Activated CD4-positive, alpha-beta T cell treated with anti-CD3 and anti-CD28 coated beads for 36 hours (primary cell): ENCODE measurements at regions of chr7 and their contacts with region 1.

Region 1: GRCh38 chr7:99408379-99409191 is at the starts of genes BUD31 and PDAP1:
- DNase-seq: peak; percentile 94
- ATAC-seq: peak; percentile 89
- H3K4me3 Mint-ChIP-seq: peak within 1 kb of the TSS; percentile 90
- H3K27ac Mint-ChIP-seq: peak within 1 kb of the TSS; percentile 96
- H3K4me1 Mint-ChIP-seq: peaks cover 40% of the 10 kb centered on the region
- H3K27me3 Mint-ChIP-seq: no peaks in the 10 kb centered on the region
- total RNA-seq, gene BUD31: 140 to 190 TPM
- total RNA-seq, gene PDAP1: 171 TPM

Region 2: GRCh38 chr7:99374103-99375064 is 34.2 kb before region 1 on chr7 and contains the start of gene ARPC1B:
- CTCF ChIA-PET with region 1: interaction called, 3 read pairs
- POLR2A ChIA-PET with region 1: interaction called, 5 read pairs
- intact Hi-C with region 1: loop called (anchors 1 to 5 kb)
- DNase-seq: peak; percentile 94
- ATAC-seq: peak; percentile 61
- H3K4me3 Mint-ChIP-seq: peak within 1 kb of the TSS; percentile 72
- H3K27ac Mint-ChIP-seq: peak within 1 kb of the TSS; percentile 67
- H3K4me1 Mint-ChIP-seq: peaks cover 28% of the 10 kb centered on the region
- H3K27me3 Mint-ChIP-seq: no peaks in the 10 kb centered on the region
- total RNA-seq, gene ARPC1B: 318 to 326 TPM

Region 3: GRCh38 chr7:99419323-99420021 is 10.9 kb after region 1 on chr7:
- CTCF ChIA-PET with region 1: interaction called, 6 read pairs
- POLR2A ChIA-PET with region 1: interaction called, 13 read pairs
- intact Hi-C with region 1: no loop called
- DNase-seq: no peak
- ATAC-seq: no peak
- H3K4me3 Mint-ChIP-seq: no peak overlapping the region
- H3K27ac Mint-ChIP-seq: no peak overlapping the region
- H3K4me1 Mint-ChIP-seq: peaks cover 7% of the 10 kb centered on the region
- H3K27me3 Mint-ChIP-seq: no peaks in the 10 kb centered on the region

Region 4: DNA sequence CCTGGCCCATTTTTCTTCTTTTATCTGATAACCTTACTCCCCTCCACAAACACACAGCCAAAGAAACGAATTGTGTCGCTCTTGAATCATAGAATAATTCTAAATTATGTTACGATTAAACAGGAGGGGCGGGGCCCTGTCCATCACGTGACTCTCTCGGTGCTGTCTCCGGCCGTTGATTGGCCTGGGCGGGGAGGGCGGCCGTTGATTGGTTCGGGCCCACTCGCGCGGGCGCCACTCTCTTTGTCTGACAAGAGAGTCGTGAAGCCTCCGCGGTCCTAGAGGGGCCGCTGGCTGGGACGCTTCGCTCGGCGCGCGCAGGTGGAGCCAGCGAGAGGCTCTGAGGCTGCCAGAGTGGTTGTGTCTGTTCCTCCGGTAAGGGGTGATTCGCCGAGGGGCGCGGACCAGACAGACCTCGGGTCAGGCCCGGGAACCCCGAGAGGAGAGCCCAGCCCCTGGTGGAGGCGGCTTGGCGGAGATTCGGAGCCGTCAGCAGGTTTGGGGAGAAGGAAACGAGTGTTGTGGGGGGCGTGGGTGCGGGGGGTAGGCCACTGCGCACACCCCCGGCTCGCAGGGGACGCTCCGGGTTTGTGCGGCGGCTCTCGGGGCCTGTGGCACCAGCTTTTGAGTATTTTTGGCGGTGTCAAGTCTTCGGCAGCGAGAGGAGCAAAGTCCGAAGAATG is 64.1 kb after region 1 on chr7 and contains the start of gene ZNF789:
- CTCF ChIA-PET with region 1: no interaction called
- POLR2A ChIA-PET with region 1: no interaction called
- intact Hi-C with region 1: loop called (anchors 1 to 5 kb)
- DNase-seq: peak; percentile 99
- ATAC-seq: peak; percentile 97
- H3K4me3 Mint-ChIP-seq: peak within 1 kb of the TSS; percentile 91
- H3K27ac Mint-ChIP-seq: peak within 1 kb of the TSS; percentile 96
- H3K4me1 Mint-ChIP-seq: peaks cover 29% of the 10 kb centered on the region
- H3K27me3 Mint-ChIP-seq: no peaks in the 10 kb centered on the region
- total RNA-seq, gene ZNF789: 18.2 to 18.9 TPM

Region 5: GRCh38 chr7:99558306-99559174 is 150.0 kb after region 1 on chr7 and contains the start of gene ZNF655:
- CTCF ChIA-PET with region 1: no interaction called
- POLR2A ChIA-PET with region 1: interaction called, 3 read pairs
- intact Hi-C with region 1: loop called in 1 of 2 experiments (anchors 2 kb)
- DNase-seq: peak; percentile 90
- ATAC-seq: peak; percentile 75
- H3K4me3 Mint-ChIP-seq: peak within 1 kb of the TSS; percentile 94
- H3K27ac Mint-ChIP-seq: peak within 1 kb of the TSS; percentile 96
- H3K4me1 Mint-ChIP-seq: peaks cover 49% of the 10 kb centered on the region
- H3K27me3 Mint-ChIP-seq: no peaks in the 10 kb centered on the region
- total RNA-seq, gene ZNF655: 51.1 to 52.0 TPM

Region 6: GRCh38 chr7:99597762-99598501 is 189.3 kb after region 1 on chr7 and contains the start of gene TMEM225B:
- CTCF ChIA-PET with region 1: no interaction called
- POLR2A ChIA-PET with region 1: no interaction called
- intact Hi-C with region 1: no loop called
- DNase-seq: peak; percentile 67
- ATAC-seq: peak; percentile 10
- H3K4me3 Mint-ChIP-seq: no peak within 1 kb of the TSS
- H3K27ac Mint-ChIP-seq: no peak within 1 kb of the TSS
- H3K4me1 Mint-ChIP-seq: no peaks in the 10 kb centered on the region
- H3K27me3 Mint-ChIP-seq: no peaks in the 10 kb centered on the region
- total RNA-seq, gene TMEM225B: 0.57 to 0.58 TPM

Region 7: DNA sequence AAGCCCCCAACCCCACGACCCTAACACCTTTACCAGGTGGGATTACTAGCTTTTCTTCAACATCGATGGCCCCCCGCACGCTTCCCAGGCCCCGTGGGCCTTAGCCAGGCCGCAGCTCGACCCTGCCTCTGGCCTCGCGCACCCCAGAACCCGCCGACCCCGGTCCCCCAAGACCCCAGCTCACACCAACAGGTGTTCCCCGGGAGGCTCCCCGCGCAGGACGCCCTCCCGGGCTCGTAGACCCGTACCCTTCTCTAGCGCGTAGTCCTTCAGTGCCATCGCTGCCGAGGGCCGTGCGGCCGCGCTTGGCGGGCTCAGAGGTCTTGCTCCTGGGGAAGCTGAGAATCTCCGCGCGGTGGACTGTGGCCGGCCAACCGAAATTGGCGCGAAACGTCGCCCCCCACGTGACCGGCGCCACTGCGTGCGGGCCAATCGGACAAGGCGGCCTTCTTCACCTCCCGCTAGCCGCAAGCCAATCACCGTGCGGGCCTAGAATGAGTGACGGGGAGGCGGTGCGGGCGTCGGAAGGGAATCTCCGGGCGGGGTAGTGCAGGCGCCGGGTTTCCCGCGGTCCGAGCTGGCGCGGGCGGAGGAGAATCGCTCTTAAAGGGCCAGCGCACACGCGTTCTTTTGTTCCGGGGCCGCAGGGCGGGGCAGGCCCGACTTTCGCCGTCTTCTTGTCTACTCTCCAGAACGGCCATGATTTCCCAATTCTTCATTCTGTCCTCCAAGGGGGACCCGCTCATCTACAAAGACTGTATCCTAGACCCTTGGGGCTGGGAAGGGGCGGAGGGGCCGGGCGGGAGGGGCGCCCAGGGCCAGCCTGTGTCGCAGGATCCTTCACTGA is 692.7 kb after region 1 on chr7 and contains the starts of genes AP4M1 and MCM7:
- CTCF ChIA-PET with region 1: no interaction called
- POLR2A ChIA-PET with region 1: no interaction called
- intact Hi-C with region 1: loop called in 1 of 2 experiments (anchors 5 kb)
- DNase-seq: peak; percentile 99
- ATAC-seq: peak; percentile 91
- H3K4me3 Mint-ChIP-seq: peak within 1 kb of the TSS; percentile 90
- H3K27ac Mint-ChIP-seq: peak within 1 kb of the TSS; percentile 94
- H3K4me1 Mint-ChIP-seq: peaks cover 41% of the 10 kb centered on the region
- H3K27me3 Mint-ChIP-seq: no peaks in the 10 kb centered on the region
- total RNA-seq, gene AP4M1: 8.8 to 10.4 TPM
- total RNA-seq, gene MCM7: 411 to 429 TPM